ENCODE measurements at regions of chr3 and their contacts with region 1.

Region 1: GRCh38 chr3:12994607-12995388 is 78.4 kb downstream of the IQSEC1 start:
- DNase-seq: peak; percentile 81 to 85
- ATAC-seq: peak; percentile 54 to 61
- H3K4me3 ChIP-seq: peak overlapping the region; percentile 78 to 99 (median 86)
- H3K27ac ChIP-seq: peak overlapping the region; percentile 86 to 97 (median 94)
- H3K4me1 ChIP-seq: peaks cover 19% of the 10 kb centered on the region in 2 donors
- H3K27me3 ChIP-seq: no peaks in the 10 kb centered on the region
- CTCF ChIP-seq: peak; percentile 89 to 98 (median 94)
- POLR2A ChIP-seq: peak; percentile 66 to 84

Region 2: DNA sequence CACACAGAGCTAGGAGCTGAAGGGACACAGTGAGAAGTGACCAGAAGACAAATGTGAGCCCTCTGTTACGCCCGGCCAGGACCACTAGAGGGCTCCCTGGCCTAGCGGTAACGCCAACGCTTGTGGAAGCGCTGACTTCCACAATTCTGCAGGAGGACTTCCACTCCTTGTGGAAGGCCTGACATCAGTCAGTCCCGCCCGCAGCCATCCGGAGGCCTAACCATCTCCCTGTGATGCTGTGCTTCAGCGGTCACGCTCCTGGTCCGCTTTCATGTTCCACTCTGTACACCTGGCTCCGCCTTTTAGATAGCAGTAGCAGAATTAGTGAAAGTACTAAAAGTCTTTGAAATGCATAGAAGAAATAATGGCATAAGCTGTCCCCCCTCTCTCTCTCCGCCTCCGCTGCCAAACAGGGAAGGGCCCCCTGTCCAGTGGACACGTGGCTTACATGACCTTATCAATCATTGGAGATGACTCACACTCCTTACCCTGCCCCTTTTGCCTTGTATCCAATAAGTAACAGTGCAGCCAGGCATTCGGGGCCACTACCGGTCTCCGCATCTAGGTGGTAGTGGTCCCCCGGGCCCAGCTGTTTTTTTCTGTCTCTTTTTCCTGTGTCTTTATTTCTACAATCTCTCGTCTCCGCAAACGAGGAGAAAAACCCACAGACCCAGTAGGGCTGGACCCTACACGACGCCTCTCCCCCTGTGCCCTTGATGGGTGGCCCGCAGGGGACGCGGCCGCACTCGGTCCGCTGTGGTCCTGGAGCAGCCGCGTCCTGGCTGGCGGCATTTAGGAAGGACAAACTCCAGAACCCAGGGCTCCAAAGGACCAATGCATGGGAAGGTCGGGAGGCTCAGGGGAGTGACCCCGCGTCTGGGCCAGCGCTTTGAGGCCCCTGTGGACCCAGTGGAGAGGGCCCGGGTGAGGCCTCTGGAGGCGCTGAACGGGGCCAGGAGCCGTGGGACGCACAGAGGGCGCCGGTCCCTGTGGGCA is 126.5 kb before region 1 on chr3:
- in situ Hi-C with region 1: no loop called
- intact Hi-C with region 1: loop called (anchors 1 kb)
- DNase-seq: peak; percentile 74 to 82
- ATAC-seq: peak; percentile 78 to 79
- H3K4me3 ChIP-seq: no peak overlapping the region
- H3K27ac ChIP-seq: no peak overlapping the region
- H3K4me1 ChIP-seq: peaks cover 21 to 28% of the 10 kb centered on the region in 2 donors
- H3K27me3 ChIP-seq: no peaks in the 10 kb centered on the region
- CTCF ChIP-seq: peak; percentile 82 to 94 (median 92)
- POLR2A ChIP-seq: no peak

Region 3: GRCh38 chr3:12891985-12892839 is 102.6 kb before region 1 on chr3:
- in situ Hi-C with region 1: loop called (anchors 10 to 25 kb)
- intact Hi-C with region 1: no loop called
- DNase-seq: peak; percentile 46 to 56
- ATAC-seq: peak in 1 of 2 donors; percentile 76
- H3K4me3 ChIP-seq: peak overlapping the region in 3 of 4 donors; percentile 18 to 33 (median 30)
- H3K27ac ChIP-seq: no peak overlapping the region
- H3K4me1 ChIP-seq: peaks cover 20 to 24% of the 10 kb centered on the region in 2 donors
- H3K27me3 ChIP-seq: no peaks in the 10 kb centered on the region
- CTCF ChIP-seq: peak; percentile 79 to 94 (median 87)
- POLR2A ChIP-seq: no peak

Region 4: GRCh38 chr3:12934431-12934830 is 60.4 kb before region 1 on chr3:
- in situ Hi-C with region 1: loop called in 2 of 4 experiments (anchors 10 kb)
- intact Hi-C with region 1: loop called (anchors 2 kb)
- DNase-seq: peak in 1 of 2 donors; percentile 62
- ATAC-seq: peak; percentile 49 to 62
- H3K4me3 ChIP-seq: peak overlapping the region in 1 of 4 donors; percentile 32
- H3K27ac ChIP-seq: peak overlapping the region; percentile 83 to 89 (median 84)
- H3K4me1 ChIP-seq: peaks cover 65 to 69% of the 10 kb centered on the region in 2 donors
- H3K27me3 ChIP-seq: no peaks in the 10 kb centered on the region
- CTCF ChIP-seq: no peak
- POLR2A ChIP-seq: no peak

Region 5: GRCh38 chr3:12954891-12955650 is 39.7 kb before region 1 on chr3:
- in situ Hi-C with region 1: no loop called
- intact Hi-C with region 1: loop called (anchors 2 kb)
- DNase-seq: peak; percentile 84 to 95
- ATAC-seq: peak; percentile 95
- H3K4me3 ChIP-seq: no peak overlapping the region
- H3K27ac ChIP-seq: peak overlapping the region; percentile 70 to 88 (median 80)
- H3K4me1 ChIP-seq: peaks cover 75 to 85% of the 10 kb centered on the region in 2 donors
- H3K27me3 ChIP-seq: no peaks in the 10 kb centered on the region
- CTCF ChIP-seq: peak in 4 of 5 experiments; percentile 3 to 52 (median 35)
- POLR2A ChIP-seq: peak in 1 of 2 donors; percentile 21

Region 6: DNA sequence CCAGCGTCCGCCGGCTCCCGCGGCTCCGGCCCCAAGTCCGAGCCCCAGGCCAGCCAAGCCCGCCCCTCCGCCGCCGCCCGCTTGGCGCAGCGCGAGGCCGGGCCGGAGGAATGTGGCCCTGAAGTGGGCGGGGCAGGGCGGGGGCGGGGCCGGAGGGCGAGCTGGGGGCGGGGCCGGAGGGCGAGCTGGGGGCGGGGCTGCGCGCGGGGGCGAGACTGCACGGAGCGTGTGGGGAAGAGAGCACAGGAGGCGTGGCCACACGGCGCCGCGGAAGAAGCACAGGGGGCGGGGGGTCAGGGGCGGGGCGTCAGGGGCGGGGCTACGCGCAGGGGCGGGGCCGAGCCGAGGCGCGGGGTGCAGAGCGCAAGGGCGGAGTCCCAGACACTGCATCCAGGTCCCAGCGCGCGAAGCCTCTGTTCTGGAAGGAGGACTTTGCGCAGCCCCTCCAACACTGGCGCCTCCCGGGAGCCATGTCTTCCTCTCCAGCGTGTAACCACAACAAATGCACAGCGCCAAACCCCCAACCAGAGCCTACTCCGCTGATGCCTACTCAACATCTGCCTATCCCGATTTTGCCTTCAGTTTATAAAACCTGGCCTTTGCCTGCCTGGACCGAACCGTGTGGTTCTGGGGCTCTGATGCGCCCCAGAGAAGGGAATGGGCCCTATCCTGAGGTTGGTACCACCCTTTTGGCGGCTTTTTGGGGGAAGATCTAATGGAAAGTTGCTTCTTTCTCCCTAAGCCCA is 27.0 kb before region 1 on chr3:
- in situ Hi-C with region 1: no loop called
- intact Hi-C with region 1: loop called (anchors 2 kb)
- DNase-seq: peak; percentile 89 to 90
- ATAC-seq: peak; percentile 53 to 65
- H3K4me3 ChIP-seq: peak overlapping the region; percentile 59 to 82 (median 69)
- H3K27ac ChIP-seq: peak overlapping the region; percentile 70 to 90 (median 82)
- H3K4me1 ChIP-seq: peaks cover 78 to 84% of the 10 kb centered on the region in 2 donors
- H3K27me3 ChIP-seq: no peaks in the 10 kb centered on the region
- CTCF ChIP-seq: no peak
- POLR2A ChIP-seq: peak in 1 of 2 donors; percentile 44

Measured in gastrocnemius medialis (tissue), 4 donors.